MCF 10A (cell line): ENCODE measurements at regions of chr1 and their contacts with region 1.

Region 1: DNA sequence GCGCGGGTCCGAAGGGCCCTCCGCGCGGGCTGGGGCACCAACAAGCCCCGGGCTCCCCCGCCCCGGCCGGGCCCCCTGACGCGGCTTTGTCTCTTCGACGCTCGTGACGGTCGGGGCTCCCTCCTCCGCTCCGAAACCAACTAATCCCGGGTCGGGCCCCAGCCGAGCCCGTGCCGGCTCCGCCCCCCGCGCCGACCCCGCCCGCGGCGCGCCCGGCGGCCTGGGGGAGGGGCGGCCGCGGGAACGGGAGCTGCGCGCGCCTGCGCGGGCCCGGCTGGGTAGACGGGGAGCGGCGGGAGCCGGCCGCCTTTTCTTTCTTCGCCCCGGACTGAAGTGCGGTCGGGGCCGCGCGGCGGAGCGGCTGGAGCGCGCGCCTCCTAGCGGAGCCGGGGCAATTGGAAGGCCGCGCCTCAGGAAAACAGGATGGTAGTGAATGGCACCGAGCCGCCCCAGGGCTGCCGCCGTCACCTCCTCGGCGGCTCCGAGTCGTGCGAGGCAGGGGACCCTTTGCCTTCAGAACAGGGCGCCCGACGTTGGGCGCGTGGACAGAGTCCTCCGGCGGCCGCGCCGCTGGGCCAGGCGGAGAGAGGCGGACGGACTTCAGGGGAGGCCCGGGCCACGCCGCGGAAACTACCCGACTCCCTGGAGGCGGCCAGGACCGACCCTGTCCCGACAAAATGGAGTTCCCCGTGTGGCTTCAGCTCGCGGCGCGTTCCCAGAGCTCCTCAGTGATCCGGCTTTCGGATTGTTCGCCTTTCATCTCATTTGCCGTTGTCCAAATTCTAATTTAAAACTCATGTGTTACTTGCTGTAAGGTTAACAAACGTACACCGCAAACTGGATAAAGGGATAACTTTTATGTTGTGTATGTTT is at the start of gene TP53BP2:
- DNase-seq: peak; percentile 95
- H3K4me3 Mint-ChIP-seq: peak within 1 kb of the TSS; percentile 87
- H3K27ac Mint-ChIP-seq: peak within 1 kb of the TSS; percentile 100
- H3K4me1 Mint-ChIP-seq: peaks cover 21% of the 10 kb centered on the region
- H3K27me3 Mint-ChIP-seq: no peaks in the 10 kb centered on the region
- CTCF ChIP-seq: peak; percentile 90
- total RNA-seq, gene TP53BP2: 62.4 and 64.0 TPM in 2 replicates

Region 2: DNA sequence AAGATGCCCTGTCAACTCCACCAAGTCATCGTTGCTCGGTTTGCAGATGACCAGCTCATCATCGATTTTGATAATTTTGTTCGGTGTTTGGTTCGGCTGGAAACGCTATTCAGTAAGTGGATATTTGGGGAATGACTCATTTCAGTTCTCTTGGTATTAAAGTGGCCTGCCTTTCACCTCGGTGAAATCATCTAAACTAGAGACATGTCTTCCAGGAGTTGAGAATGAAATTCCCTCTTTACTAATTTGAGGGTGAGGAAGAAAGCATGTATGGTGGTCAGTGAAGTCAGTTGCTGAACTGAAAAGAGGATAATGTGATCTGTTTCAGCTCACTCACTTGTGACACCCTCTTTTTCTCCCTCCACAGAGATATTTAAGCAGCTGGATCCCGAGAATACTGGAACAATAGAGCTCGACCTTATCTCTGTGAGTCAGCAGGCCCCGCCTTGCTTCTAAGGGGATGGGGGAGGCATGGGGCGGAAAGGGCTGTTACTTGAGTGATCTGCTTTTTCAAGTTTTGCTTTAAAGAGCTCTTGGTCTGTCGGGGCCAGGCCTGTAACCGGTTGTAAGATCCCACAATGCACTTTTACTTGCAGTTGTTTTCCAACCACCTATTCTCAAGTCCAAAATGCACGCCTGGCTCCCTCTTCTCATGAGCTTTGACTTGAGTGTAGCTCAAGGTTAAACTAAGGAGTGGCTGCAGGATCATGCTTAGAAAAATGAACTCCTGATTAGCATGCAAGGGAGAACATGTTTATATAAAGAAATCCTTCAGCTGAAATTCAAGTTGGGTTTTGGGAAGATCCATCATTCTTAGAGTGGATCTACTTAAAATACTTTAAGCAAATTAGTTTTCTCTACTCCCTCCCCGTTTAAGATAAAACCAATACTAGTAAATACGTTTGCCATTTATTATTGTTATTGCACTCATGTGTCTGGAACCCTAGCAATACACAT is 74.0 kb before region 1 on chr1:
- CTCF ChIA-PET with region 1: interaction called, 4 read pairs
- POLR2A ChIA-PET with region 1: interaction called, 28 read pairs
- intact Hi-C with region 1: loop called (anchors 1 kb)
- DNase-seq: peak; percentile 82
- H3K4me3 Mint-ChIP-seq: peak overlapping the region; percentile 52
- H3K27ac Mint-ChIP-seq: peak overlapping the region; percentile 92
- H3K4me1 Mint-ChIP-seq: peaks cover 69% of the 10 kb centered on the region
- H3K27me3 Mint-ChIP-seq: no peaks in the 10 kb centered on the region
- CTCF ChIP-seq: no peak

Region 3: DNA sequence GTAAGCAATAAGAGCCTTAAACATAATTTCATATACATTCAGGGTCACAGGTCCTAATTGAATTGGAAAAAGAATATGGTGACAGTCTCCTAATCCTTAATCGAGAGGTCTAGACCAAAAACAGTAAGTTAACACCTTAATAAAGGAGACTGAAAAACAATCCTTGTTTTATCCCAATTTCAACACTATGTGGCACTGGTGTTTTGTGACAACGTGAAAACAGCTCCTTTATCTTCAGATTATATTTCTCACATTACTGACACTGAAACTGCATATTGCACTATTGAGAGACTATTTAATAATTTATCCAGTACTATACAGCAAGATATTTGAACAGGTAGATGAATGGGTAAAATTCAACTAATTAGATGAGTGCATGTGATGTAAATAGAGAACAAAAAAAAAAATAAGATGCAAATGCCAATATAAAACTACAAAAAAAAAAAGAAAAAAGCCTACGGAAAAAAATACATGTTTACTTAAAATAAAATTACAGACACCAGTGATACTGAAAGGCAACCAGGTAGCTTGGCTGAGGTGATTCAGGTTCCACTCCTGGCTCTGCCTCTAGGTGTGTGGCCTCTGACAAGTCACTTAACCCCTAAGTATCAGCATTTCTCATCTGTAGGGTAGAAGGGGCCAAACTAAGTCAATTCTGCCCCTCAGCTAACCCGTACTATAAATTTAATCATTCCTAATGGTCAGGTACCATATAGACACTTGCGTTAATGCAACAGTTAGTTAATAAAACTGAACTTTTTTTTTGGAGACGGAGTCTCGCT is 34.2 kb before region 1 on chr1:
- CTCF ChIA-PET with region 1: interaction called, 36 read pairs
- POLR2A ChIA-PET with region 1: interaction called, 176 read pairs
- intact Hi-C with region 1: loop called (anchors 1 kb)
- DNase-seq: peak; percentile 74
- H3K4me3 Mint-ChIP-seq: no peak overlapping the region
- H3K27ac Mint-ChIP-seq: no peak overlapping the region
- H3K4me1 Mint-ChIP-seq: peaks cover 28% of the 10 kb centered on the region
- H3K27me3 Mint-ChIP-seq: no peaks in the 10 kb centered on the region
- CTCF ChIP-seq: peak; percentile 86

Region 4: DNA sequence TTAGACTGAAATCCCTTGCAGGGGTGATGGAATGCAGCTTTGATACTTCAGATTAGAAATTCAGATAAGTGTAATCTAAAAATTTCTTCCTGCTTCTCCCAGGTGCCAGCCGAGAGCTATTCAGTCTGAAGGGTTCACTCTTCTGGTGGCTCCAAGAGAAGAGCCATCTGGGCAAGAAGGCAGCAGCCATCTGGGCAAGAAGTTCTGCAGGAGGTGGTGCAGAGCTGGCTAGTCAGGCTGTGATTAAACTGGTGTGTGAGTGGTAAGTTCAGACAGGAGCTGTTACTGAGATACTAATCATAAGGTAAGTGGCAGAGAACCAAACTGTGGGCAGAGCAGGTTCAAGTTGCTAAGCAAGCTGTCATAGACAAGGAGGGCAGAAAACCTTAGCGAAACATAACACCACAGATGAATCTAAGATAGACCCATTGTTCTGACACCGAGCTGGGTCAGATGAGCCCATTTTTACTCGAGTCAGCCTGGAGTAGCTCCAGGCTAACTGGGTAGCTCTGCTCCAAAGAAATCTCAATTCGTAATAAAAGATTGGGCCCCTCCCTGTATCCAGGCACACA is 14.1 kb after region 1 on chr1:
- CTCF ChIA-PET with region 1: interaction called, 43 read pairs
- POLR2A ChIA-PET with region 1: interaction called, 103 read pairs
- intact Hi-C with region 1: no loop called
- DNase-seq: no peak
- H3K4me3 Mint-ChIP-seq: no peak overlapping the region
- H3K27ac Mint-ChIP-seq: peak overlapping the region; percentile 18
- H3K4me1 Mint-ChIP-seq: peaks cover 14% of the 10 kb centered on the region
- H3K27me3 Mint-ChIP-seq: no peaks in the 10 kb centered on the region
- CTCF ChIP-seq: no peak

Region 5: GRCh38 chr1:223887747-223888418 is 41.8 kb after region 1 on chr1:
- CTCF ChIA-PET with region 1: interaction called, 14 read pairs
- POLR2A ChIA-PET with region 1: interaction called, 101 read pairs
- intact Hi-C with region 1: loop called (anchors 2 kb)
- DNase-seq: peak; percentile 100
- H3K4me3 Mint-ChIP-seq: peak overlapping the region; percentile 68
- H3K27ac Mint-ChIP-seq: peak overlapping the region; percentile 95
- H3K4me1 Mint-ChIP-seq: peaks cover 25% of the 10 kb centered on the region
- H3K27me3 Mint-ChIP-seq: no peaks in the 10 kb centered on the region
- CTCF ChIP-seq: no peak